B cell (primary cell): ENCODE measurements at regions of chr2 and their contacts with region 1.

Region 1: GRCh38 chr2:127649684-127650040 is 3.7 kb downstream of the GPR17 start:
- DNase-seq: peak; percentile 87
- ATAC-seq: peak; percentile 71
- H3K4me3 ChIP-seq: peak overlapping the region in 1 of 5 experiments; percentile 6
- H3K4me3 Mint-ChIP-seq: peak overlapping the region; percentile 74
- H3K27ac ChIP-seq: no peak overlapping the region
- H3K27ac Mint-ChIP-seq: peak overlapping the region; percentile 82
- H3K4me1 ChIP-seq: peaks cover 30 to 66% of the 10 kb centered on the region in 2 donors
- H3K4me1 Mint-ChIP-seq: peaks cover 64% of the 10 kb centered on the region
- H3K27me3 ChIP-seq: no peaks in the 10 kb centered on the region
- H3K27me3 Mint-ChIP-seq: no peaks in the 10 kb centered on the region
- CTCF ChIP-seq: peak; percentile 92

Region 2: GRCh38 chr2:127609031-127609751 is 40.5 kb before region 1 on chr2:
- CTCF ChIA-PET with region 1: interaction called, 16 read pairs
- POLR2A ChIA-PET with region 1: no interaction called
- intact Hi-C with region 1: no loop called
- DNase-seq: no peak
- ATAC-seq: no peak
- H3K4me3 ChIP-seq: no peak overlapping the region
- H3K4me3 Mint-ChIP-seq: no peak overlapping the region
- H3K27ac ChIP-seq: no peak overlapping the region
- H3K27ac Mint-ChIP-seq: no peak overlapping the region
- H3K4me1 ChIP-seq: peaks cover 5 to 25% of the 10 kb centered on the region in 2 donors
- H3K4me1 Mint-ChIP-seq: peaks cover 35% of the 10 kb centered on the region
- H3K27me3 ChIP-seq: no peaks in the 10 kb centered on the region
- H3K27me3 Mint-ChIP-seq: no peaks in the 10 kb centered on the region
- CTCF ChIP-seq: no peak

Region 3: DNA sequence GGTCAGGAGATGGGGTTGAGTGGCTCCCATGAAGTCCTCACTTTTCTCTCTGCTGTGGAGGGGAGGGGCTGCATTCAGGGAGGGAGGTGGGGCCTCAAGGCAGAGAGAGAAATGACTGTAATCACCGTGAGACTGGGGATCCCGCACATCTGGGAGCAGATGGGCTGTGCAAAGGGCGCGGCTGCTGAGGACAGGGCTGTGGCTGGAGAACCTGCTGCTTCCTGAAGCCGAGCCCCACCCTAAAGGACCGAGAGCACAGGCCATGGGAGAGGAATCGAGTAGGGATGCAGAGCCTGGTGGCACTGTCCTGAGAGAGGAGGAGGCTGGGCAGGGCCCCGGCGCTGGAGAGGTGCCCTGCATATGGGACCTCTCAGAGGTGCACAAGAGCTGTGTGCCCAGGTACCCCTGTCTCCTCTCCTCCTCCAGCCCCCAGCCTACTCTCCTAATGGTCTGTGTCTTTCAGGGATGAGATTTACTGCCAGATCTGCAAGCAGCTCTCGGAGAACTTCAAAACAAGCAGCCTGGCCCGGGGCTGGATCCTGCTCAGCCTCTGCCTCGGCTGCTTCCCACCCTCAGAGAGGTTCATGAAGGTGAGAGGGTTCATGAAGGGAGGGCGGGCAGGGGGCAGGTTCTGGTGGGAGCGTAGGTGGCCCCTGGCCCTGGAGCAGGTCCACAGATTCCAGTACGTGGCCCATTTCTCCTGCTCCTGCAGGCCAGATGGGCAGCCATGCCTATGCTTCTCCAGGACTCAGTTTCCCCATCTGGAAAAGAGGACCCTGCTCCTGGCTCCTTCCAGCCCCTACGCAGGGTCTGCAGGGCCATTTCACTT is 29.6 kb before region 1 on chr2:
- CTCF ChIA-PET with region 1: interaction called, 6 read pairs
- POLR2A ChIA-PET with region 1: no interaction called
- intact Hi-C with region 1: loop called (anchors 2 kb)
- DNase-seq: no peak
- ATAC-seq: peak; percentile 20
- H3K4me3 ChIP-seq: peak overlapping the region in 3 of 5 experiments; percentile 19 to 52 (median 44)
- H3K4me3 Mint-ChIP-seq: peak overlapping the region; percentile 79
- H3K27ac ChIP-seq: peak overlapping the region in 1 of 2 donors; percentile 63
- H3K27ac Mint-ChIP-seq: peak overlapping the region; percentile 91
- H3K4me1 ChIP-seq: peaks cover 26 to 74% of the 10 kb centered on the region in 2 donors
- H3K4me1 Mint-ChIP-seq: peaks cover 79% of the 10 kb centered on the region
- H3K27me3 ChIP-seq: no peaks in the 10 kb centered on the region
- H3K27me3 Mint-ChIP-seq: no peaks in the 10 kb centered on the region
- CTCF ChIP-seq: no peak

Region 4: DNA sequence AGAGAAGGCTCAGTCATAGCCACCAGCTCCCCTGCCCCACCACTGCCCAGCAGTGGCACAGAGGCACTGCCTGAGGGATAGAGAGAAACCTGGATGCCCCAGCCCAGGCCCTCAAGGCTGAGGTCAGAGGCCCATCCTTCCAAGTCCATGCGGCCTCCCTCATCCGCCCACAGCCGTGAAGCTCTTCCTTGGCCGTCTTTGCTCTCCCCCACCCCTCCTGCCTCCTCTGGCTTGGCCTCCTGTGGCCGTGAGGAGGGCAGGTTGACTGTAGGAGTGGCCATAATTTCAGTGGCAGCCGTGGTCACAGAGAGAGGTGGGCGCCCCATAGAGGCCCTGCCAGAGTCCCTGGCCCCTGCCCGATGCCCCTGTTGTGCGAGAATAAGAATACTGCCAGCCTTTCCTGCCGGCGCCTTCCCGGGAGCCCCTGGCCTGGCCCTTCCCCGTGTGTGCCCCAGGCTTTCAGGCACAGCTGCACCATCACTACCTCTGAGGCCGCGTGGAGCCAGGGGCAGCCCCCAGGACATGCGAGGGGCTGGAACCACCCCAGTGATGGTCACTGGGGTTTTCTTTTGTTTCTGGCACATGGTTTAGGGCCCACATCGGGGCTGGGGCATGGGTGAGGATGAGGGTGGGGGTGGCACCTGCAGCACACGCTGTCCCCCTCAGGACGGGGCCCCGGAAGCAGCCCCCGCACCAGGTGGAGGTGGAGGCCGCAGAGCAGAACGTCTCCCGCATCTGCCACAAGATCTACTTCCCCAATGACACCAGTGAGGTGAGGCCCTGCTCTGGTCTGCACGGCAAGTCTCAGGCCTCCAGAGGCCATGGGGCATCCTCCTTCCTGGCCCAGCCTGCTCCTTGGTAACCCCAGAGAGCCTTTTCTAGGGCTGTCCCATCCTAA is 16.8 kb before region 1 on chr2:
- CTCF ChIA-PET with region 1: interaction called, 53 read pairs
- POLR2A ChIA-PET with region 1: no interaction called
- intact Hi-C with region 1: loop called (anchors 2 kb)
- DNase-seq: peak; percentile 80
- ATAC-seq: peak; percentile 66
- H3K4me3 ChIP-seq: no peak overlapping the region
- H3K4me3 Mint-ChIP-seq: peak overlapping the region; percentile 77
- H3K27ac ChIP-seq: peak overlapping the region; percentile 80 to 92
- H3K27ac Mint-ChIP-seq: peak overlapping the region; percentile 96
- H3K4me1 ChIP-seq: peaks cover 86 to 97% of the 10 kb centered on the region in 2 donors
- H3K4me1 Mint-ChIP-seq: peaks cover 91% of the 10 kb centered on the region
- H3K27me3 ChIP-seq: no peaks in the 10 kb centered on the region
- H3K27me3 Mint-ChIP-seq: no peaks in the 10 kb centered on the region
- CTCF ChIP-seq: no peak

Region 5: GRCh38 chr2:127664065-127664894 is 14.6 kb after region 1 on chr2:
- CTCF ChIA-PET with region 1: interaction called, 10 read pairs
- POLR2A ChIA-PET with region 1: no interaction called
- intact Hi-C with region 1: no loop called
- DNase-seq: no peak
- ATAC-seq: no peak
- H3K4me3 ChIP-seq: no peak overlapping the region
- H3K4me3 Mint-ChIP-seq: no peak overlapping the region
- H3K27ac ChIP-seq: no peak overlapping the region
- H3K27ac Mint-ChIP-seq: no peak overlapping the region
- H3K4me1 ChIP-seq: peaks cover 0 to 10% of the 10 kb centered on the region in 2 donors
- H3K4me1 Mint-ChIP-seq: peaks cover 8% of the 10 kb centered on the region
- H3K27me3 ChIP-seq: peaks cover 0 to 39% (median 23%) of the 10 kb centered on the region in 4 experiments
- H3K27me3 Mint-ChIP-seq: peaks cover 47% of the 10 kb centered on the region
- CTCF ChIP-seq: no peak